ENCODE measurements at regions of chr1 and their contacts with region 1.

Region 1: GRCh38 chr1:152001391-152002249 is 8.0 kb upstream of the S100A10 start:
- DNase-seq: peak; percentile 66 to 89
- ATAC-seq: peak; percentile 66 to 70
- H3K4me3 ChIP-seq: no peak overlapping the region
- H3K27ac ChIP-seq: peak overlapping the region; percentile 72 to 83
- H3K4me1 ChIP-seq: peaks cover 52% of the 10 kb centered on the region
- CTCF ChIP-seq: peak; percentile 95
- EP300 ChIP-seq: no peak
- POLR2A ChIP-seq: no peak
- RAD21 ChIP-seq: peak; percentile 99

Region 2: GRCh38 chr1:151888972-151889570 is 112.5 kb before region 1 on chr1:
- CTCF ChIA-PET with region 1: interaction called, 10 read pairs
- POLR2A ChIA-PET with region 1: no interaction called
- DNase-seq: peak; percentile 33 to 41
- ATAC-seq: peak; percentile 68 to 80; a peak in 3 of 6 replicates
- H3K4me3 ChIP-seq: no peak overlapping the region
- H3K27ac ChIP-seq: no peak overlapping the region
- H3K4me1 ChIP-seq: no peaks in the 10 kb centered on the region
- CTCF ChIP-seq: peak; percentile 67
- EP300 ChIP-seq: no peak
- POLR2A ChIP-seq: no peak
- RAD21 ChIP-seq: peak; percentile 70 to 72

Region 3: DNA sequence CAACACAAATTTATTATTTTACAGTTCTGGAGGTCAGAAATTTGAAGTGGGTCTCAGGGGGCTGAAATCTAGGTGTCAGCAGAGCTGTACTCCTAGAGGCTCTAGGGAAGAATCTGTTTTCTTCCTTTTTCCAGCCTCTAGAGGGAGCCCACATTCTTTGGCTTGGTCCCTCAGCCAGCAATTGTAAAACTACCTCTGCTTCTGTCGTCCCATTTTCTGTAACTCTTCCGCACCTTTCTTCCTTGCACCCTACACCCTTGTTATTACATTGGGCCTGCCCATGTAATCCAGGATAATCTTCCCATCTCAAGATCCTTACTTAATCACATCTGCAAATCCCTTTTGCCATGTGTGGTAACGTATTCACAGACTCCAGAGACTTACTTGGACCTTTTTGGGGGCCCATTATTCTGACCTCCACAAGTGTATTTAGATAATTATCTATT is 67.5 kb before region 1 on chr1:
- CTCF ChIA-PET with region 1: interaction called, 378 read pairs
- POLR2A ChIA-PET with region 1: no interaction called
- DNase-seq: peak; percentile 54 to 76
- ATAC-seq: peak; percentile 94 to 97
- H3K4me3 ChIP-seq: no peak overlapping the region
- H3K27ac ChIP-seq: peak overlapping the region in 1 of 2 experiments; percentile 43; a peak in 1 of 6 replicates
- H3K4me1 ChIP-seq: peaks cover 33% of the 10 kb centered on the region
- CTCF ChIP-seq: peak; percentile 98
- EP300 ChIP-seq: no peak
- POLR2A ChIP-seq: no peak
- RAD21 ChIP-seq: peak; percentile 98 to 99

Region 4: GRCh38 chr1:151953409-151954094 is 48.1 kb before region 1 on chr1:
- CTCF ChIA-PET with region 1: interaction called, 1,410 read pairs
- POLR2A ChIA-PET with region 1: no interaction called
- DNase-seq: no peak
- ATAC-seq: peak in 1 of 2 experiments; percentile 73; a peak in 3 of 6 replicates
- H3K4me3 ChIP-seq: no peak overlapping the region
- H3K27ac ChIP-seq: peak overlapping the region; percentile 38 to 45; a peak in 4 of 6 replicates
- H3K4me1 ChIP-seq: peaks cover 18% of the 10 kb centered on the region
- CTCF ChIP-seq: no peak
- EP300 ChIP-seq: no peak
- POLR2A ChIP-seq: no peak
- RAD21 ChIP-seq: no peak

Region 5: DNA sequence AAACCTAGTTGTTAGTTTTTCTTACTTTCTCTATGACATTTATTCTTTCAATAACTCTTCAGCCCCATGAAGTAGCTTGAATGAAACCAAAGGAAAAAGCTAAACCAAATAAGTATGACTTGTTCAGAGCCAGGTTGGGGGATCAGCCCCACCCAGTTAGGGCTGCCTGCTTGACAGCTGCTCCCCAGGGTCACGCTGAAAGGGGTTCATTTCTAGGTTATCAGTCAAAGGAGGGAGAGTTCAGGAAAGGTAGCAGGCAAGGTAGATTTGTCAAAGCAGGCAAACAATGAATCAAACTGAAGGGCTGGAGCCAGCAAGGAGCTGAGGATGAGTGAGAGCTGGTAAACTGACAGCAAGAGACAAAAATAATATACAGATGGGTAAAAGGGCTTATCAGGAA is 38.3 kb after region 1 on chr1:
- CTCF ChIA-PET with region 1: interaction called, 48 read pairs
- POLR2A ChIA-PET with region 1: interaction called, 4 read pairs
- DNase-seq: no peak
- ATAC-seq: no peak
- H3K4me3 ChIP-seq: no peak overlapping the region
- H3K27ac ChIP-seq: peak overlapping the region in 1 of 2 experiments; percentile 24; a peak in 1 of 6 replicates
- H3K4me1 ChIP-seq: peaks cover 6% of the 10 kb centered on the region; the same call in 2 of the 3 replicates
- CTCF ChIP-seq: no peak
- EP300 ChIP-seq: no peak
- POLR2A ChIP-seq: no peak
- RAD21 ChIP-seq: no peak

Region 6: GRCh38 chr1:152667648-152668047 is 666.0 kb after region 1 on chr1:
- CTCF ChIA-PET with region 1: no interaction called
- POLR2A ChIA-PET with region 1: no interaction called
- DNase-seq: no peak
- ATAC-seq: no peak
- H3K4me3 ChIP-seq: no peak overlapping the region
- H3K27ac ChIP-seq: no peak overlapping the region
- H3K4me1 ChIP-seq: no peaks in the 10 kb centered on the region
- CTCF ChIP-seq: no peak
- EP300 ChIP-seq: no peak
- POLR2A ChIP-seq: no peak
- RAD21 ChIP-seq: no peak

Measured in A549 (cell line).